IMR-90 (cell line): ENCODE measurements at regions of chr14 and their contacts with region 1.

Region 1: DNA sequence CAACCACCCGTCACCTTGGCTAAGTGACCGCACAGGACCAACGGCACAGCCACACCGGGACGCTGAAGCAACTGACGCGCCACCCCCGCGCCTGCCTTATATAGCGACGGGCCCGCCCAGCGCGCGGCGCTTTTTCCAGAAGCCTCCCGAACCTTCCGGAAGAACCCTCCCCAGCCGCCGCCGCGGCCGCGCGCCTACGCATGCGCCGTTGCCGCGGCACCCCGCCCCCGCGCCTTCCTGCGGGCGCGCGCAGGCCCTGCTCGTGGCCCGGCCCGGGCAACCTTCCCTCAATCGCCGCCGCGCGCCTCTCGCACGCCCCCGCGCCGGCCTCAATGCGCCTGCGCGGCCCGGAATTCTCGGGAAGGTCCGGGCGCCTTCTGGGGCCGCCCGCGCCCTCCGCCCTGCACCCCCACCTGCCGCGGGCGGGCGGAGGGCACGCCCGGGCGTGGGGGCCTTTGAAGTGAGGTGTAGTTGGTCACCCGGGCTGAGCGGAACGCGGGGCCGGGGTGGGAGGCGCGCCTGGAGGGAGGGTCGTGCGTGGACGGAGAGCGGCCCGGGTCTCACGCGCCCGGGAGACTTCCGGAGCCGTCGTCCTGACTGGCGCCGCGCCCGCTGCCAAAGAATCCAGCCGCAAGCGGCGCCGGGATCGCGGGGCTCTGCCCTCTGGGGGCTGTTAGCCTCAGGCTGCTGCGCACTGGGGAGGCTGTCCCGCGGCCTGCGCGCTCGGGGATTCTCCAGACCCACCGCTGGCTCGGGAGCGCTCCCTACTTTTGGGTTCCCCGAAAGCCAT is at the start of gene HSP90AA1:
- DNase-seq: peak; percentile 88
- ATAC-seq: peak; percentile 87
- H3K4me3 ChIP-seq: peak within 1 kb of the TSS; percentile 87
- H3K27ac ChIP-seq: peak within 1 kb of the TSS; percentile 96
- H3K4me1 ChIP-seq: peaks cover 10% of the 10 kb centered on the region
- H3K27me3 ChIP-seq: no peaks in the 10 kb centered on the region
- CTCF ChIP-seq: 0 out of 2 replicates have a peak, but pooled peaks have one; percentile 14
- POLR2A ChIP-seq: peak; percentile 99
- RAD21 ChIP-seq: 0 out of 2 replicates have a peak, but pooled peaks have one; percentile 5
- total RNA-seq, gene HSP90AA1: 578 and 1,483 TPM in 2 replicates

Region 2: DNA sequence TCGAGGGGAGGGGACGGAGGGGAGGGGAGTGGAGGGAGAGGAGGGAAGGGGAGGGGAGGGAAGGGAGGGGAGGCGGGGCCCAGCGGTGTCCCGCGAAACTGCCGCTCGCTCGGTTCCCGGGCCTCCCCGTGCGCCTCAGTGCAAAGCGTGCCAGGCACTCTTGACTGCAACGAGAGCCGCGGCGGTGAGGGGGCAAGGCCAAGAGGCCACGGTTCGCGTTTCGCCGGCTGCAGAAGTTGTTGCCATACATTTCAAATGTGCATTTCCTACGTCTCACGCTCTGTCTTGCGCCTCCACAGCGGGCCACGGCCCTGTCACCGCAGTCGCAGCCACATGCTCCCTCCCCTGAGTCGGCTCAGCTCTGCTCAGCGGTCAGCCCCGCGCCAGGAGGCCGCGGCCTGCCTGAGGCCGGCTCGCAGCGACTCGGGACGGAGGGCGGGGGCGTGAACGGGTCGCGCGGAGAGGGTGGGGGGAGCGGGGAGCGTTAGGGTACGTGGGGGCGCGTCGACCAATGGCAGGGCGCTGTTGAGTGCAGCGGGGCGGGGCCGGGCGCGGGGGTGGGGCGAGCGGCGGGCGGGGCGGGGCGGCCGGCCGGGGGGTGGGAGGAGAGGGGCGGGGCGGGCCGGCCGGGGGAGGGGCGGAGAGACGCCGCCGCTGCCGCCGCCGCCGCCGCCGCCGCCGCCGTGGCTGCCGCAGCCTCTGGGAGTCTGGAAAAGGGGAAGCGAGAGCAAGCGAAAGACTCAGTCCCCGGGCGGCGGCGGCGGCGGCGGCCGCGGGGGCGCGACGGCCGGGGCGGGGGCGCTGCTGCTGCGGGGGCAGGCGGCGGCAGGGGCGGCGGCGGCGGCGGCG is 325.9 kb before region 1 on chr14 and contains the start of gene PPP2R5C:
- CTCF ChIA-PET with region 1: no interaction called
- POLR2A ChIA-PET with region 1: no interaction called
- dilution Hi-C with region 1: no loop called
- in situ Hi-C with region 1: no loop called
- intact Hi-C with region 1: no loop called
- DNase-seq: peak; percentile 82
- ATAC-seq: peak; percentile 78
- H3K4me3 ChIP-seq: peak within 1 kb of the TSS; percentile 99
- H3K27ac ChIP-seq: peak within 1 kb of the TSS; percentile 65
- H3K4me1 ChIP-seq: no peaks in the 10 kb centered on the region
- H3K27me3 ChIP-seq: peaks cover 16% of the 10 kb centered on the region
- CTCF ChIP-seq: no peak
- POLR2A ChIP-seq: 0 out of 2 replicates have a peak, but pooled peaks have one; percentile 32
- RAD21 ChIP-seq: no peak
- total RNA-seq, gene PPP2R5C: 78.7 and 107 TPM in 2 replicates

Region 3: GRCh38 chr14:102063091-102063802 is 23.9 kb before region 1 on chr14:
- CTCF ChIA-PET with region 1: interaction called, 4 read pairs
- POLR2A ChIA-PET with region 1: no interaction called
- dilution Hi-C with region 1: no loop called
- in situ Hi-C with region 1: no loop called
- intact Hi-C with region 1: loop called (anchors 2 kb)
- DNase-seq: peak; percentile 83
- ATAC-seq: peak; percentile 98
- H3K4me3 ChIP-seq: no peak overlapping the region
- H3K27ac ChIP-seq: no peak overlapping the region
- H3K4me1 ChIP-seq: no peaks in the 10 kb centered on the region
- H3K27me3 ChIP-seq: no peaks in the 10 kb centered on the region
- CTCF ChIP-seq: peak; percentile 57
- POLR2A ChIP-seq: no peak
- RAD21 ChIP-seq: peak; percentile 61

Region 4: GRCh38 chr14:102139248-102140026 is 52.3 kb after region 1 on chr14 and contains the start of gene WDR20:
- CTCF ChIA-PET with region 1: no interaction called
- POLR2A ChIA-PET with region 1: no interaction called
- dilution Hi-C with region 1: no loop called
- in situ Hi-C with region 1: no loop called
- intact Hi-C with region 1: loop called (anchors 2 kb)
- DNase-seq: peak; percentile 92
- ATAC-seq: peak; percentile 98
- H3K4me3 ChIP-seq: peak within 1 kb of the TSS; percentile 67
- H3K27ac ChIP-seq: peak within 1 kb of the TSS; percentile 82
- H3K4me1 ChIP-seq: no peaks in the 10 kb centered on the region
- H3K27me3 ChIP-seq: no peaks in the 10 kb centered on the region
- CTCF ChIP-seq: no peak
- POLR2A ChIP-seq: peak; percentile 83
- RAD21 ChIP-seq: no peak
- total RNA-seq, gene WDR20: 27.4 and 28.1 TPM in 2 replicates